Activated CD4-positive, alpha-beta T cell treated with anti-CD3 and anti-CD28 coated beads, Interleukin-2, amount 10 ng/mL, durations not matched to agents 24 days and 14 days (primary cell): ENCODE measurements at regions of chr11 and their contacts with region 1.

Region 1: GRCh38 chr11:29343465-29344333 is 673.1 kb downstream of the KCNA4 start:
- DNase-seq: peak; percentile 79
- H3K4me3 Mint-ChIP-seq: no peak overlapping the region
- H3K27ac Mint-ChIP-seq: no peak overlapping the region
- H3K4me1 Mint-ChIP-seq: no peaks in the 10 kb centered on the region
- H3K27me3 Mint-ChIP-seq: no peaks in the 10 kb centered on the region

Region 2: DNA sequence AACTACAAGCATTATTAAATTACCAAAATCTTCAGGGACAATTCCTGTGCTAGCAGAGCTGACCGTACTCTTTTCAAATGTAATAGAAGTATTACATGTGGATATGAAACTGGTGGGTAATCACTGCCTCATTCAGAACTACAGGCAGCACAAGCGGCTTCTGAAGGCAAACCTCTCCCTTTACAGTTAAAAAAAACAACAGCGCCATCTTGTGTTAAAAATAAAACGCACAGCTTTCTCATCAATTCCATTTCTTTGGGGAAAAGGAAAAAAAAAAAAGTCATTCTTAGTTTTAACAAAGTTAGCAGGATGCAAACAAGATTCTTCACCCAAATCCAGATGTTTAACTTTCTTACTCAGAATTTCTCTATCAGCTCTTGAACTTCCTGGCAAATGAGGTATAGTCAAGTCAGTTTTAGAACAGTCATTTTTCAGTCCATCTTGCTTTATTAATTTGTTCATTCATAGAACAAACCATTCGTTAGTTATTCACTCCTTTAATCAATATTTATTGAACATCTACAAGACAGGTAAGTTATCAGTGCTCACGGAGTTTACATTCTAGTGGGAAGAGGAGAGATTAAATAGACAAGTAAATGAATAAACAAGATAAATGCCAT is 1574.3 kb after region 1 on chr11:
- intact Hi-C with region 1: loop called (anchors 5 kb)
- DNase-seq: peak; percentile 63
- H3K4me3 Mint-ChIP-seq: no peak overlapping the region
- H3K27ac Mint-ChIP-seq: no peak overlapping the region
- H3K4me1 Mint-ChIP-seq: no peaks in the 10 kb centered on the region
- H3K27me3 Mint-ChIP-seq: peaks cover 6% of the 10 kb centered on the region